Tibial artery (tissue), 4 donors: ENCODE measurements at regions of chr16 and their contacts with region 1.

Region 1: DNA sequence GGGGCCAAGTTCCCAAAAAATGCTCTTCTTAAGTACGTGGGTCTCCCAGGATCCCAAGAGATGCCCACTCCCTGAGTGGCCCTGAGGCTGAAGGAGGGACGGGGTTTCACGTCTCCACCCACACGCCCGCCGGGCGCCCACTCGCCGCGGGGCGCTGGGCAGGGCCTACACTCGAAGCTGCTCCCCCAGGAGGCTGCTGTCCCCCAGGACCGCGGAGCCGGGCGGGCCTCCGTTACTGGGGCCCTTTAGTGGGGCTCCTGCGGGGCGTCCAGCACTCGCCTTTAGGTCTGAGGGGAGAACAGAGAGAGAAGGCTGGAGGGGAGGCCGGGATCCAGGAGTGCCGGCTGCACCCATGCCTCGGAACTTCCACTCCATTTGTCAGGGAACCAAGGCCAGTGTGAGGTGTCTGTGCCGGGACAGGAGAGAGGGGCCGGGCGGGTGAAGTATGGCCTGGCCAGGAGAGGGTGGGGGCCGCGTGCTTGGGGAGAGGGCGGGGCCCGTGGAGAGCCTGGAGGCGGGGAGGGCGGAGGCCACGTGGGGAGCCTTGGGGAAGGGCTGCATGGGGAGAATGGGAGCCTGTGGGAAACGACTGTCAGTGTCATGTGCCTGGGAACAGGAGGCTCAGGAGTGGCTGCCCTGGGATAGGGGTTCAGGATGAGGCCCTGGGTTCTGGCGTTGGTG is 18.8 kb downstream of the NUBP1 start:
- DNase-seq: no peak
- H3K4me3 ChIP-seq: no peak overlapping the region
- H3K27ac ChIP-seq: no peak overlapping the region
- H3K4me1 ChIP-seq: peaks cover 0 to 2% (median under 1%) of the 10 kb centered on the region in 4 donors
- H3K27me3 ChIP-seq: no peaks in the 10 kb centered on the region
- CTCF ChIP-seq: no peak

Region 2: GRCh38 chr16:9212621-9213020 is 1549.9 kb before region 1 on chr16:
- intact Hi-C with region 1: no loop called
- DNase-seq: peak in 1 of 2 donors; percentile 27
- H3K4me3 ChIP-seq: no peak overlapping the region
- H3K27ac ChIP-seq: no peak overlapping the region
- H3K4me1 ChIP-seq: no peaks in the 10 kb centered on the region
- H3K27me3 ChIP-seq: no peaks in the 10 kb centered on the region
- CTCF ChIP-seq: no peak

Region 3: GRCh38 chr16:12699161-12699560 is 1936.7 kb after region 1 on chr16:
- intact Hi-C with region 1: loop called (anchors 5 kb)
- DNase-seq: no peak
- H3K4me3 ChIP-seq: no peak overlapping the region
- H3K27ac ChIP-seq: no peak overlapping the region
- H3K4me1 ChIP-seq: no peaks in the 10 kb centered on the region
- H3K27me3 ChIP-seq: no peaks in the 10 kb centered on the region
- CTCF ChIP-seq: no peak